ENCODE measurements at regions of chr12 and their contacts with region 1.

Region 1: GRCh38 chr12:62435303-62436163 is 31.1 kb upstream of the MON2 start:
- DNase-seq: peak; percentile 54
- ATAC-seq: peak; percentile 84
- H3K4me3 Mint-ChIP-seq: peak overlapping the region; percentile 78
- H3K27ac Mint-ChIP-seq: no peak overlapping the region
- H3K4me1 Mint-ChIP-seq: peaks cover 19% of the 10 kb centered on the region
- H3K27me3 Mint-ChIP-seq: peaks cover 42% of the 10 kb centered on the region

Region 2: GRCh38 chr12:62409068-62409467 is 26.5 kb before region 1 on chr12:
- CTCF ChIA-PET with region 1: interaction called, 13 read pairs
- POLR2A ChIA-PET with region 1: no interaction called
- DNase-seq: no peak
- ATAC-seq: no peak
- H3K4me3 Mint-ChIP-seq: no peak overlapping the region
- H3K27ac Mint-ChIP-seq: no peak overlapping the region
- H3K4me1 Mint-ChIP-seq: no peaks in the 10 kb centered on the region
- H3K27me3 Mint-ChIP-seq: no peaks in the 10 kb centered on the region

Region 3: DNA sequence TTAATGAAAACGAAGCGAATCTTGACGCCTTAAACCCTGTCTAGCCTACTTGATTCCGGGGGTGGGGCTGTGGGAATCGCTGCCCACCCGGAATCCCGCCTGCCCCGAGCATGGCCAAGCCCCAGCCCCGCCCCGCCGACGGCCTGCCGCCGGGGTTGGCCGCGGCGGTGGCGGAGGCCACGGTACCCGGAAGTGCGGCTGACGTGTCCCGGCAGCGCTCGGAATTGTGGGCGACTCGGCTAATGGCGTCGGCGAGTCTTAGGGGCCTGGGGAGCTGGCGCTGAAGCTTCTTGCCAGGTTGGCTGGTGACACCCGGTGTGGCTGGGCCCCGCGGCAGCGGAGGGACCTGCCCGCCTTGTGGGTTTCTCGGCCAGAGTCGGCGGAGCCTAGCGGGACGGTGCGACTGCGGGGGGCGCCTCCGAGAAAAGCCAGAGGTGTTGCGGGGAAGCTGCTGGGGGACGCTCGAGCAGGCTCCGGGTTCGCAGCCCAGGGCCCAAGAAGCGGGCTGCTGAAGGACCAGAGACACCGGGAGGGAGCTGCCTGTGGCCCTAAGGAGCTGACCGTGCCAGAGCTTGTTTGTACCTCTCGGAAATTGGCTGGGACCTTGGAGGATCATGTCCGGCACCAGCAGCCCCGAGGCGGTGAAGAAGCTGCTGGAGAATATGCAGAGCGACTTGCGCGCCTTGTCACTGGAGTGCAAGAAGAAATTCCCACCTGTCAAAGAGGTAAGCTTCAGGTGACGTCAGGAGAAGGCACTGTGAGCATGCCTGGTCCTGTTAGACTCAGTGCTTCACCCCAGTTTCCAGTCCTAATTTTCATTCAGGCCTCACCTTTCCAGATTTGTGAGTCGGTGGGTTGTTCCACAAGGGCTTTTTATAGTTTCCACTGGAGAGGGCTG is 31.3 kb after region 1 on chr12 and contains the start of gene MON2:
- CTCF ChIA-PET with region 1: interaction called, 45 read pairs
- POLR2A ChIA-PET with region 1: interaction called, 3 read pairs
- DNase-seq: peak; percentile 88
- ATAC-seq: peak; percentile 98
- H3K4me3 Mint-ChIP-seq: peak within 1 kb of the TSS; percentile 90
- H3K27ac Mint-ChIP-seq: peak within 1 kb of the TSS; percentile 96
- H3K4me1 Mint-ChIP-seq: peaks cover 21% of the 10 kb centered on the region
- H3K27me3 Mint-ChIP-seq: peaks cover 3% of the 10 kb centered on the region
- total RNA-seq, gene MON2: 40.0 to 46.6 TPM

Region 4: GRCh38 chr12:62793256-62794217 is 358.0 kb after region 1 on chr12:
- CTCF ChIA-PET with region 1: interaction called, 106 read pairs
- POLR2A ChIA-PET with region 1: no interaction called
- DNase-seq: peak; percentile 75
- ATAC-seq: no peak
- H3K4me3 Mint-ChIP-seq: no peak overlapping the region
- H3K27ac Mint-ChIP-seq: no peak overlapping the region
- H3K4me1 Mint-ChIP-seq: peaks cover 5% of the 10 kb centered on the region
- H3K27me3 Mint-ChIP-seq: peaks cover 21% of the 10 kb centered on the region

Region 5: GRCh38 chr12:62799126-62799736 is 363.7 kb after region 1 on chr12:
- CTCF ChIA-PET with region 1: interaction called, 106 read pairs
- POLR2A ChIA-PET with region 1: no interaction called
- DNase-seq: peak; percentile 75
- ATAC-seq: peak; percentile 94
- H3K4me3 Mint-ChIP-seq: no peak overlapping the region
- H3K27ac Mint-ChIP-seq: no peak overlapping the region
- H3K4me1 Mint-ChIP-seq: no peaks in the 10 kb centered on the region
- H3K27me3 Mint-ChIP-seq: peaks cover 12% of the 10 kb centered on the region

Region 6: GRCh38 chr12:62813031-62813829 is 377.7 kb after region 1 on chr12:
- CTCF ChIA-PET with region 1: interaction called, 15 read pairs
- POLR2A ChIA-PET with region 1: no interaction called
- DNase-seq: peak; percentile 52
- ATAC-seq: peak; percentile 55
- H3K4me3 Mint-ChIP-seq: peak overlapping the region; percentile 38
- H3K27ac Mint-ChIP-seq: no peak overlapping the region
- H3K4me1 Mint-ChIP-seq: peaks cover 21% of the 10 kb centered on the region
- H3K27me3 Mint-ChIP-seq: peaks cover 24% of the 10 kb centered on the region

Region 7: GRCh38 chr12:63068857-63069442 is 633.4 kb after region 1 on chr12:
- CTCF ChIA-PET with region 1: interaction called, 14 read pairs
- POLR2A ChIA-PET with region 1: no interaction called
- DNase-seq: peak; percentile 23
- ATAC-seq: no peak
- H3K4me3 Mint-ChIP-seq: no peak overlapping the region
- H3K27ac Mint-ChIP-seq: no peak overlapping the region
- H3K4me1 Mint-ChIP-seq: no peaks in the 10 kb centered on the region
- H3K27me3 Mint-ChIP-seq: no peaks in the 10 kb centered on the region

Measured in activated CD8-positive, alpha-beta T cell treated with anti-CD3 and anti-CD28 coated beads, Interleukin-2, amount 10 ng/mL, durations not matched to agents 7 days and 5 days (primary cell).